ENCODE measurements at regions of chr17 and their contacts with region 1.

Region 1: DNA sequence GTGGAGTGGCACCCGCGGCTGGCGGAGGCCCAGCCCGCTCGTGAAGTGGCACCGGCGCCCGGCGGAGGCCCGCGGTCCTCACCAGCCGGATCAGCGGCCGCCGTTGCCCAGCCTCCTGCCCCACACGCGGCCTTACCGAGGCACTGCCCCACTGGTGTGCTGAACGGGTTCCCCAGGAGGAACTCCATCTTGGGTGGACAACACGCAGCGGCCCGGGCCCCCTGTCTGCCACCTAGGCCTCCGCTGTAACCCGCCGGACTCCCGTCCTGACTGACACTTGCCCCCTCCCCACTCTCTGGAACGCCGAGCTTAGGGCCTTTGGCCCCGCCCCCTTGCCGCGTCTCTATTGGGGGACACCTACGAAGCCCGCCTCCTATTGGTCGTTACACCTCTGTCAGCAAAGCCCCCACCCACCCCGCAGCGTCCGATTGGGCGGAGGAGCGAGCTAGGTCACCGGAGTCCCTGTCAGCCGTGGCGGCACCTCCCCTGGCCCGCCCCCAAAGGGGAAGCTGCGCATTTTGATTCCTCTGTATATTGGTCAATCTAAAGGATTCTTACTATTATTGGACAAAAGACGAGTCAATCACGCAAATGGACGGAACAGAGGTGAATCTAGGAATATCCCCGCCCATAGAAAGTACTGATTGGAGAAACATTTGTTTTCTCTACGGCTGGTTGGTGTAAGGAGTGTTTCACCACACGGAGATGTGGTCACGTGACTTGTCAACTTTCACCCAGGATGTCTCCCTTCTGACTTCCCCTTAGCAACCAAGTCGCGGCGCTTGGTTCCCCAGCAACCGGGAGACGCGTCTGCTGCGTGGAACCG is at the starts of genes DRC3 and TOM1L2:
- DNase-seq: peak; percentile 100
- H3K4me3 ChIP-seq: peak within 1 kb of the TSS; percentile 56 to 69
- H3K27ac ChIP-seq: peak within 1 kb of the TSS; percentile 86 to 87
- H3K4me1 ChIP-seq: peaks cover 6 to 17% of the 10 kb centered on the region in 2 donors
- H3K27me3 ChIP-seq: no peaks in the 10 kb centered on the region
- CTCF ChIP-seq: peak in 1 of 3 experiments; percentile 7
- total RNA-seq, gene DRC3: 7.2 TPM
- total RNA-seq, gene TOM1L2: 39.0 TPM

Region 2: GRCh38 chr17:17823433-17824118 is 148.8 kb before region 1 on chr17:
- intact Hi-C with region 1: loop called (anchors 1 kb)
- DNase-seq: peak; percentile 19 to 87
- H3K4me3 ChIP-seq: peak overlapping the region; percentile 51 to 62
- H3K27ac ChIP-seq: peak overlapping the region; percentile 64 to 72
- H3K4me1 ChIP-seq: peaks cover 37 to 38% of the 10 kb centered on the region in 2 donors
- H3K27me3 ChIP-seq: no peaks in the 10 kb centered on the region
- CTCF ChIP-seq: no peak

Region 3: DNA sequence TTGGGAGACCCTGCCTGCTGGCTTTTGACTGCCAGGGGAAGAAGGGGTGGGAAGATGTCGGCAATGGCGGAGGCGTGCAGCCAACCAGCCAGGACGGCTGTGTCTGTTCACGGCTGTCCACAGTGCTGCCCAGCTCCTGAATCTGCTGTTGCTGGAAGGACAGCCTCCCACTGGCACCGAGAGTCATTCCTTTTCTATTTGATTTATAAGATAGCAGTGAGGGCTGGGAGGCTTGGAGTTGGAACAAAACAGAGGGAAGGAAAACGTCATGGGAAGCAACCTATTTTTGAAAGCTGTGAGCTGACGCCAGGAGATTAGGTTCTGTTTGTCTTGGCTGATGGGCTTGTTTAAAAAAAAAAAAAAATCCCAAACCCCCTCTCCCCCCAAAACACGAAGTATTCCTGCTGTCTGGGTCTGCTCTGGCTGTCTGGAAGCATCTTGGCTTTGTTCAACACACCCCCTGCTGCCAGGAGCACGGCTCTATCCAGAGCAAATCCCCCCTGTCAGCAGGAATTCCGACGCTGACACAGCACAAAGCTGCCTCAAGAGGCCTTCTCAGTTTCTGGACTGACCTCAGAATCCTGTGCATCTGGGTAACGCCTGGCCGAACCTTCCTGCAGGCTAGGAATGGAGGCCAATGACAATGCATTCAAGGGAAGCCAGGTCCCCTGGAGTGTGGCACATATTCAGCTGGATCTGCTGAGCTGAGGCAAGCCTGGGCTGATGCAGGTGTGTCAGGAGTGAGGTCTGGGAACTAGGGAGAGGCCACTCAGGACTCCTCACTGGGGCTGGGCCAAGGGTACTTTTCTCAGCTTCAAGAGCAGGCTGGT is 94.6 kb before region 1 on chr17:
- intact Hi-C with region 1: loop called (anchors 1 kb)
- DNase-seq: peak; percentile 38 to 92
- H3K4me3 ChIP-seq: peak overlapping the region in 1 of 2 donors; percentile 37
- H3K27ac ChIP-seq: peak overlapping the region; percentile 87 to 89
- H3K4me1 ChIP-seq: peaks cover 9 to 25% of the 10 kb centered on the region in 2 donors
- H3K27me3 ChIP-seq: no peaks in the 10 kb centered on the region
- CTCF ChIP-seq: no peak

Region 4: GRCh38 chr17:17933775-17934174 is 38.6 kb before region 1 on chr17:
- intact Hi-C with region 1: loop called (anchors 5 kb)
- DNase-seq: no peak
- H3K4me3 ChIP-seq: no peak overlapping the region
- H3K27ac ChIP-seq: no peak overlapping the region
- H3K4me1 ChIP-seq: peaks cover 12 to 22% of the 10 kb centered on the region in 2 donors
- H3K27me3 ChIP-seq: no peaks in the 10 kb centered on the region
- CTCF ChIP-seq: no peak

Region 5: GRCh38 chr17:17959520-17960361 is 12.6 kb before region 1 on chr17:
- intact Hi-C with region 1: loop called (anchors 1 kb)
- DNase-seq: no peak
- H3K4me3 ChIP-seq: peak overlapping the region in 1 of 2 donors; percentile 17
- H3K27ac ChIP-seq: peak overlapping the region; percentile 77 to 81
- H3K4me1 ChIP-seq: peaks cover 0 to 30% of the 10 kb centered on the region in 2 donors
- H3K27me3 ChIP-seq: no peaks in the 10 kb centered on the region
- CTCF ChIP-seq: no peak

Region 6: GRCh38 chr17:18363101-18364049 is 391.0 kb after region 1 on chr17 and contains the start of gene SHMT1:
- intact Hi-C with region 1: loop called (anchors 5 kb)
- DNase-seq: peak; percentile 83 to 96
- H3K4me3 ChIP-seq: peak within 1 kb of the TSS; percentile 86 to 89
- H3K27ac ChIP-seq: peak within 1 kb of the TSS; percentile 66 to 72
- H3K4me1 ChIP-seq: peaks cover 0 to 6% of the 10 kb centered on the region in 2 donors
- H3K27me3 ChIP-seq: no peaks in the 10 kb centered on the region
- CTCF ChIP-seq: no peak
- total RNA-seq, gene SHMT1: 16.7 TPM

Measured in ascending aorta (tissue), 2 donors.